GM10248 (cell line): ENCODE measurements at regions of chr3 and their contacts with region 1.

Region 1: DNA sequence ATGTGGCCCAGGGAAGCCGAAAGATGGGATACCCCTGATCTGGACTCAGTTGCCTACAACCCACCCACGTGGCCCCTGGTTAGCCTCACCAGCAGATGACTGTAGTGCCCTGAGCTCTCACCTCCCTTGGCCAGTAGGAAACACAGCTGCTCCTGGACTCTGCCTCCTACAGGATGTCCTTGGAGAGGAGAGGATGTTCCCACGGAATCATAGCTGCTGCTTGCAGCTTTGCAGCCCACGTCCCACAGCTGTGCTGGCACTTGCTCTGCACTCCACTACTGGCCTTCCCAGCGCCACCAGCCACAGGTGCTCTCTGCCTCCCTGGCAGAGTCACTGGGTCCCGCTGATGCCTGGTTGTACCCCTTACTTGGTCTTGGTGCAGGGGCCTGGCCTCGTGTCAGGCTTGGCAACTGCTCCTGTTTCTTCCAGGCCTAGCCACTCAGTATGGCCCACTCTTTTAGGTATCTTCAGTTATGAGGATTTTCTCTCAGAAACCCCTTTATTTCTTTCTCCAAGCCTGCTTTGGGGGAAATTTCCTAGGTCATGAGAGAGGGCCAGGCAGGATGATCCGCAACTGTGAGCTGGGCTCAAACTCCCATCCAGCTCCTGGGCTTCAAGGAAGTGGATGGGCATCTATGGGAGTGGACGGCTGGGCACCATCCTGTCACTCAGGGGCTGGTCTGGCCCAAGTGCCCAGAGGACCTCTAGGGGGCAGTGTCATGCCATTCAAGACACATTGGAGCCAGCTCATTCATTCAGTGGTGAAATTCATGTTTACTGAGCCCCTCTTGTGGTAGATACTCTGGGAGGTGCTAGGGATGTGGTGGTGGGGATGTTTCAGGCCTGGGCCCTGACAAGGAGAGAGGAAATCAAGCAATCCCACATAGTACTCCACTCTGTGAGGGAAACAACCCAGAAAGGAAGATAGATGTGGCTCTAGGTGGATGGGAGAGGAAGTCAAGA is 16.2 kb upstream of the VILL start:
- DNase-seq: peak; percentile 80
- CTCF ChIP-seq: peak; percentile 93

Region 2: DNA sequence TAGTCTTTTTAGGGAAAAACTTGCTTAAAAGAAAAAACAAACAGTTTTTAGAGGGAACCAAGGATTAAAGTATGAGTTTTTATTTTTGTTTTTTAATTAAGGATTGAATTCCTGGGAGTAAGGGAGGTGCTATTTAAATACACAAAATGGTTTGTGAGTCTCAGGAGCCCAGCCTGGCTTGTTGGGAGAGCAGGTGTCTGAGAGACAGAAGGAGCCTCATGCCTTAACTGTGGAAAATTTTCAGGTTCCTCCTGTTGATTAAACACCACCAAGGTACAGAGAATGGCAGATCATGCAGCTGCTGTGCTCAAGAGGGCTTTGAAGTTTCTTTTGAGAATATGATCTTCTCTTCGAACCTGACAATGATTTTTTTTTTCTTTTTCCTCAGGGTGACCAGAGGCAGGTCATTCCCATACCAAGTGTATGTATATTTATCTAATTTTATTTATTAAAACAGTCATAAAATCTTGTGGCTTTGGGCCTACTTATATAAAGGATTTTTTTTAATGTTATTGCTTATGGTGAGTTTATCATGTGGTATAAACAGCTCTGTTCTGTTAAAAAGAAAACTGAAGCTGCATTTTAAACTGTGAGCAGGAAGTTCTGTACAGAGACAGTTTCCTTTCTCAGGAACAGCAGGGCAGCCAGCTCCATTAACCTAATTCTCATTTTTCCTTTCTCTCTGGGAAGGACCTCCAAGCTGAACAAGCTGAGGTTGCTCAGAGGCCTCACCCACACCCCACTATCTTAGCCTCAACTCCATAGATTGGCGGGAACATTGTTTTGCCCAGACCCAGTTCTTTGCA is 17.5 kb before region 1 on chr3:
- CTCF ChIA-PET with region 1: interaction called, 84 read pairs
- POLR2A ChIA-PET with region 1: no interaction called
- DNase-seq: no peak
- CTCF ChIP-seq: no peak

Region 3: DNA sequence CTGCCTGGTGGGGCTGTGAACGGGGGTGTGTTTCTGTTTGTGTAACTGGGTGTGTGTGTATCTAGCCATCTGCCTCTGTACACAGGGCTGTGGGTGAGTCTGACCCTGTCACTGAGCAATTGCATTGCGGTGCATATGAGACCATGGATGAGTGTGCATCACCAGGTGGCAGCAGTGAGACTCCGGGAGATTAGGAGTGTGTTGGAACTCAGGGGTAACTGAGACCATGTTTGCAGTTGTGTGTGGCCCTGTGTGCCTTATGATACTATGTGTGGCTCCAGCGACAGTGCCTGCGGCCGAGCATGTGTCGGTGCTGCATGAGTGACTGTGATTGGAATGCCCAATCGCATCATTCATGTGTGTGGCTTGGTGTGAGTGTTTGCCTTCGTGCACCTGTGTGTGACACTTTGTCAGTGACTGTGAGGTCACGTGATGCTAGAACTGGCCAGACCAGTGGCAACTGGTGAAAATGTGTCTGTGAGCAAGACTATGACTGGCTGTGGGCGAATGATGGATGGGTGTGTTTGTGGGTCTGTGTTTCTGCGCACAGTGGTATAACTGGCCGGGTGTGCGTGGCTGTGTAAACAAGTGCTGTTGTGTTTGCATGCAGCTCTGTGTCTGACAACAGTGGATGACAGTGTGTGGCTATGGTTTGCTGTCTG is 30.1 kb after region 1 on chr3:
- CTCF ChIA-PET with region 1: interaction called, 42 read pairs
- POLR2A ChIA-PET with region 1: no interaction called
- DNase-seq: no peak
- CTCF ChIP-seq: peak; percentile 75

Region 4: GRCh38 chr3:38054291-38055001 is 80.0 kb after region 1 on chr3:
- CTCF ChIA-PET with region 1: no interaction called
- POLR2A ChIA-PET with region 1: no interaction called
- DNase-seq: no peak
- CTCF ChIP-seq: no peak

Region 5: DNA sequence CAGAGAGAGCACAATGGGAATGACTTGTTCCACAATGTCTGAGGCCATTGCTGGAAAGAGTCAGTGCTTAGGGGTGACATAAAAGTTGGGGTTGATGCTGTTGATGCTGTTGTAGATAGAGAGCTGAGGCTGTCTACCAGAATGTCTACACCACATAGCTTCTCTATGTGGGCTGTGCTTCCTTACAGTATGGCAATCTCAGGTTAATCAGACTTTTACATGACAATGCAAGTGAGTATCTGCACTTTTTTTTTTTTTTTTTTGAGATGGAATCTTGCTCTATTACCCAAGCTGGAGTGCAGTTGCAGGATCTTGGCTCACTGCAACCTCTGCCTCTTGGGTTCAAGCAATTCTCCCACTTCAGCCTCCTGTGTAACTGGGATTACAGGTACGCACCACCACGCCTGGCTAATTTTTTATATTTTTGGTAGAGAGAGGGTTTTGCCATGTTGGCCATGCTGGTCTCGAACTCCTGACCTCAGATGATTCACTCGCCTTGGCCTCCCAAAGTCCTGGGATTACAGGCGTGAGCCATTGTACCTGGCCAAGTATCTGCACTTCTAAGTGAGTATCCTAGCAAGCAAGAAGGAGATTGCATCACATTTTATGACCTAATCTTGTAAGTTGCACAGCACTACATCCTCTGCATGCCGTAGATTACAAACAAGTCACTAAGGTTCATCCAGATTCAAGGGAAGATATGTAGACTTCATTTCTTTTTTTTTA is 93.3 kb after region 1 on chr3:
- CTCF ChIA-PET with region 1: no interaction called
- POLR2A ChIA-PET with region 1: no interaction called
- DNase-seq: no peak
- CTCF ChIP-seq: no peak

Region 6: GRCh38 chr3:38346587-38347410 is 372.4 kb after region 1 on chr3 and contains the start of gene XYLB:
- CTCF ChIA-PET with region 1: interaction called, 10 read pairs
- POLR2A ChIA-PET with region 1: no interaction called
- DNase-seq: peak; percentile 93
- CTCF ChIP-seq: peak; percentile 85

Region 7: GRCh38 chr3:38360345-38360744 is 385.9 kb after region 1 on chr3:
- CTCF ChIA-PET with region 1: no interaction called
- POLR2A ChIA-PET with region 1: no interaction called
- DNase-seq: no peak
- CTCF ChIP-seq: no peak